Calu3 (cell line): ENCODE measurements at regions of chr5 and their contacts with region 1.

Region 1: GRCh38 chr5:107571621-107572536 is 98.9 kb downstream of the EFNA5 start:
- DNase-seq: peak; percentile 99
- H3K4me3 Mint-ChIP-seq: peak overlapping the region; percentile 65
- H3K27ac Mint-ChIP-seq: peak overlapping the region; percentile 88
- H3K4me1 Mint-ChIP-seq: peaks cover 88% of the 10 kb centered on the region
- H3K27me3 Mint-ChIP-seq: no peaks in the 10 kb centered on the region
- CTCF ChIP-seq: peak; percentile 97

Region 2: DNA sequence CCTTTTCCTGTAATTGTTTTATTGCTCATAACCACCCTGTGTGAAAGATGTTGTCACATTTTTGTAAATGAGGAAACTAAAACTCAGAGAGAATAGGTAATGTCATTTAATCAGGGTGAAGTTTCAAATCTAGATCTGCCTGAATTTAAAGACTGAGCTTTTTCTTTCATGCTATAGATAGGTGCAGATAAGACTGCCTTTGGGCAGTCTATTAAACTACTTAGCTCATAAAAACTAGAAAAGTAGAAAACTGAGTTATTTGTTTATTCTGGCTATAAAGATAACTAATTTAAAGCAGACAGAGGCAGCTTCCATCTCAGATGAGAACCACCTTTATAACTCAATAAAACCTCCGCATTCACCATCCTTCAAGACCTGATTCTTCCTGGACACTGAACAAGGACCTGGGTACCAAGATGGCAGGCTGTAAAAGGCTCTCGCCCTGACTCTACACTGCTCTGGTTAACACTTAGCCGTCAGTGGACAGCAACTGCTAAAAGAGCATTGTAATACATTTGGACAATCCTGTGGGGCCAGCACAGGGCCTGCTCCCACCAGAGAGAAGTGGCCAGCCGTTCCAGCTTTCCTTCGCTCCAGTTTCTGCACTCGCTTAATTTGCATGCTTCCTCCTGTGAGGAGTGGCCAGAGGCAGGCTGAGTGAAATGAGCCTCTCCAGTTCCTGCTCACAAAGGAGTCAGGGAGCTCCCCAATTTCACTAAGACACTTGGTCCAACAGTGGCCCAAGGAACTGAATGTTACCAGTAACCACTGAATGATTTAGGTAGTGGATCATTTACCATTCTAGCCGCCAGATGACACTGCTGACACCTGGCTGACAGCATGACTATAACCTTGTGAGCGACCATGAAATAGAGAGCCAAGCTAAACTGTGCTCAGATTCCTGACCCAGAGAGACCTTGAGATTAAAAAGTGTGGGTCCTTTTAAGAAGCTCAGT is 467.6 kb before region 1 on chr5:
- CTCF ChIA-PET with region 1: no interaction called
- intact Hi-C with region 1: loop called (anchors 10 kb)
- DNase-seq: peak; percentile 53
- H3K4me3 Mint-ChIP-seq: no peak overlapping the region
- H3K27ac Mint-ChIP-seq: peak overlapping the region; percentile 25
- H3K4me1 Mint-ChIP-seq: peaks cover 29% of the 10 kb centered on the region
- H3K27me3 Mint-ChIP-seq: no peaks in the 10 kb centered on the region
- CTCF ChIP-seq: peak; percentile 40

Region 3: DNA sequence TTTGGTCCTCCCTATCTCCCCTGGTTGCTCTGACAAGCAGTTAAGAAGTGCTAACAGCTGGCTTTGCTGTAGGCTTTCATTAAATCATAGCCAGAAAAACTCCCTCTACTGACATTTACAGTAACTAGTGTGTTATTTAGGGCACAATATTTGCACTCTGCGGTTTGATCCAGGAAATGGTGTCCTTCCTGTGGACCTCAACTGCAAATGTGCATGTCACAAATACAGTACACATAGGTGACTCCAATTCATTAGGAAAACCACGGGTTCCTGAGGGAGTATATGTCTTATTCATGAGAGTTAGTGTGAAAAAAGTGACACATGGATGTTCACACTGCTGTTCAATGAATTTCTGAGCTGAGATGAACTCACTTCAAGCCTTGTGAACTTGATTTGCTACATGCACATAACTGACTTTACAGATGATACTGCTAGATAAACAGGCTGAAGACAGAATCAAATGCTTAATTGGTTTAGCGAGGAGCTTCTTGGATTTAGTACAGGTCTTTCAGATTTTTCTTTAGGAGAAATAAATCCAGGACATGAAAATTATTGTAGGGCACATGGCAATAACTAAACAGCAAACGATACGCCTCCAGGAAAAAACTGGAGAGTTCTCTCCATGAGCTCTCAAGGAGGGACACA is 182.6 kb before region 1 on chr5:
- CTCF ChIA-PET with region 1: interaction called, 14 read pairs
- intact Hi-C with region 1: loop called (anchors 2 kb)
- DNase-seq: peak; percentile 67
- H3K4me3 Mint-ChIP-seq: peak overlapping the region; percentile 61
- H3K27ac Mint-ChIP-seq: peak overlapping the region; percentile 97
- H3K4me1 Mint-ChIP-seq: peaks cover 64% of the 10 kb centered on the region
- H3K27me3 Mint-ChIP-seq: no peaks in the 10 kb centered on the region
- CTCF ChIP-seq: no peak

Region 4: DNA sequence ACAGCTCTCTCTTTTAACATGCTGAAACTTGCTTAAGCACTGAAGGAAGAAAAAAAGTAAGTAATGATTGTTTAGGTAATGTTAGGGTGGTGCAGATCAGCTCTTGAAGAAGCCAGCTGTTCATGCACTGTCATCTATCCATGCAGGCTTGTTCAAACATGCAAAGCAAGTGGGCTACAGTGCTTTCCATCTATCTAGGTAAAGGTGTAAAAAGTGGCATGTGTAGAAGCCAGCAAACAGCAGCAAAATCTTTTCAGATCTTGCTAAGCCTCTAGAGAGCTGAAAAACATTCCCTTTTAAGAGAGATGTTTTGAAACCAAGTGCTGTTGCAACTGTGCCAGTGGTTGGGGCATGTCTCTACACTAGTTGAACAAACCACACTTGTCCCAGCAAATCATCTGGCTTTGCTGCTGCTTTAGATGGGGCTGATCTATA is 115.6 kb before region 1 on chr5:
- CTCF ChIA-PET with region 1: interaction called, 19 read pairs
- intact Hi-C with region 1: no loop called
- DNase-seq: no peak
- H3K4me3 Mint-ChIP-seq: peak overlapping the region; percentile 24
- H3K27ac Mint-ChIP-seq: peak overlapping the region; percentile 88
- H3K4me1 Mint-ChIP-seq: peaks cover 77% of the 10 kb centered on the region
- H3K27me3 Mint-ChIP-seq: no peaks in the 10 kb centered on the region
- CTCF ChIP-seq: no peak

Region 5: DNA sequence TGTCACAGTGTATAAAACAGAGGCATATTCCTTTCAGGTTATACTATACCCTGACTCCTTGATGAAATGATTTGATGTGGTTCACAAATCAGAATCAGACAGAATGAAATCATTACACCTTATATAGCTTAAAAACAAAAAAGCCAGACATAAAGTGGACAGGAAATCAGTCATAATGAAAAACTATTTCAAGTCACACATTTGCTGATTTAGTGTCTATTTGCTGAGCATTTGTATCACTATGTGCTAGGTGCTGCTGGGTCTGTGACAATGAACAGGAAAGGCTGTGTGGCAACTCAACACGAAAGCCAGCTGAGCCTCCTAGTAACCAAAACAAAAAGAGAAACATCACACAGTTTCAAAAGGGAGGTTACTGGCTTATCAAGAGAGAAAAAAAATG is 95.1 kb before region 1 on chr5:
- CTCF ChIA-PET with region 1: interaction called, 21 read pairs
- intact Hi-C with region 1: loop called (anchors 1 kb)
- DNase-seq: peak; percentile 67
- H3K4me3 Mint-ChIP-seq: peak overlapping the region; percentile 35
- H3K27ac Mint-ChIP-seq: peak overlapping the region; percentile 96
- H3K4me1 Mint-ChIP-seq: peaks cover 87% of the 10 kb centered on the region
- H3K27me3 Mint-ChIP-seq: no peaks in the 10 kb centered on the region
- CTCF ChIP-seq: no peak

Region 6: GRCh38 chr5:107513337-107514085 is 58.4 kb before region 1 on chr5:
- CTCF ChIA-PET with region 1: no interaction called
- intact Hi-C with region 1: no loop called
- DNase-seq: no peak
- H3K4me3 Mint-ChIP-seq: no peak overlapping the region
- H3K27ac Mint-ChIP-seq: peak overlapping the region; percentile 67
- H3K4me1 Mint-ChIP-seq: peaks cover 62% of the 10 kb centered on the region
- H3K27me3 Mint-ChIP-seq: no peaks in the 10 kb centered on the region
- CTCF ChIP-seq: no peak

Region 7: GRCh38 chr5:107542428-107542827 is 29.5 kb before region 1 on chr5:
- CTCF ChIA-PET with region 1: interaction called, 7 read pairs
- intact Hi-C with region 1: loop called (anchors 2 kb)
- DNase-seq: peak; percentile 89
- H3K4me3 Mint-ChIP-seq: peak overlapping the region; percentile 56
- H3K27ac Mint-ChIP-seq: peak overlapping the region; percentile 87
- H3K4me1 Mint-ChIP-seq: peaks cover 86% of the 10 kb centered on the region
- H3K27me3 Mint-ChIP-seq: no peaks in the 10 kb centered on the region
- CTCF ChIP-seq: no peak

Region 8: GRCh38 chr5:107658528-107658927 is 86.6 kb after region 1 on chr5:
- CTCF ChIA-PET with region 1: interaction called, 14 read pairs
- intact Hi-C with region 1: no loop called
- DNase-seq: no peak
- H3K4me3 Mint-ChIP-seq: peak overlapping the region; percentile 20
- H3K27ac Mint-ChIP-seq: peak overlapping the region; percentile 71
- H3K4me1 Mint-ChIP-seq: peaks cover 66% of the 10 kb centered on the region
- H3K27me3 Mint-ChIP-seq: no peaks in the 10 kb centered on the region
- CTCF ChIP-seq: no peak